ENCODE measurements at regions of chr2 and their contacts with region 1.

Region 1: DNA sequence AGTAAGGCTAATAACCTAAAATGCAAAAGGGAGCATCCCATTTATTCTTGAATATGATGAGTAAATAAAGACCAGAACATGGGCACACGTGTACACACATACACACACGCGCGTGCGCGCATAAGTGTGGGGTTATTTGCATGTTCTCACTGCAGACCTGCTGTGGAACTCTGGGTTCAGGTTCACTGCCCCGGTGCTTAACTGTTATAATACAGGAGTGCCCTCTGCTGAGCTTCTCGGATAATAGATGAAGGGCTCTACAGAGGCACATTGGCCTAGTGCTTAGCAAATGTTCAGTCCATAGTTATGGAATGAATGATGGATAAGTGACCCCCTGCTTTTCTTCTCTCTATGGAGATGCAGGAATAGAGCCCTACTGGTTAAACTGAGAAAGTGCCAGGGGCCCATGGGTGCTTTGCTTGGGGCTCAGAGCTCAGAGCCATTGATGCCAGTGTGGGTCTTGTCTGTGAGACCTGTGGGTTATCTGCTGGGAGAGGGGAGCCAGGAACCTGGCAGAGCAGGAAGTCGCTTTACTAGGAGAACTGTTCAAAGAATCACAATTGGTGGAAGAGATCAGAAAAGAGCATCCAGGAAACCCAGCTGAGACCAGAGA is 3.6 kb upstream of the ARL4C start:
- DNase-seq: peak; percentile 94
- H3K4me3 ChIP-seq: no peak overlapping the region
- H3K27ac ChIP-seq: peak overlapping the region in 1 of 8 donors; percentile 93
- H3K4me1 ChIP-seq: peaks cover 0 to 43% (median 23%) of the 10 kb centered on the region in 6 donors
- H3K27me3 ChIP-seq: peaks cover 0 to 14% (median 4%) of the 10 kb centered on the region in 7 donors
- CTCF ChIP-seq: peak; percentile 47 to 87 (median 69)
- POLR2A ChIP-seq: no peak

Region 2: GRCh38 chr2:233976690-233977294 is 523.7 kb before region 1 on chr2:
- intact Hi-C with region 1: loop called (anchors 5 kb)
- DNase-seq: no peak
- H3K4me3 ChIP-seq: no peak overlapping the region
- H3K27ac ChIP-seq: no peak overlapping the region
- H3K4me1 ChIP-seq: peaks cover 0 to 12% (median 0%) of the 10 kb centered on the region in 6 donors
- H3K27me3 ChIP-seq: peaks cover 0 to 26% (median 0%) of the 10 kb centered on the region in 7 donors
- CTCF ChIP-seq: peak in 5 of 11 experiments; percentile 30 to 59 (median 36)
- POLR2A ChIP-seq: no peak

Region 3: DNA sequence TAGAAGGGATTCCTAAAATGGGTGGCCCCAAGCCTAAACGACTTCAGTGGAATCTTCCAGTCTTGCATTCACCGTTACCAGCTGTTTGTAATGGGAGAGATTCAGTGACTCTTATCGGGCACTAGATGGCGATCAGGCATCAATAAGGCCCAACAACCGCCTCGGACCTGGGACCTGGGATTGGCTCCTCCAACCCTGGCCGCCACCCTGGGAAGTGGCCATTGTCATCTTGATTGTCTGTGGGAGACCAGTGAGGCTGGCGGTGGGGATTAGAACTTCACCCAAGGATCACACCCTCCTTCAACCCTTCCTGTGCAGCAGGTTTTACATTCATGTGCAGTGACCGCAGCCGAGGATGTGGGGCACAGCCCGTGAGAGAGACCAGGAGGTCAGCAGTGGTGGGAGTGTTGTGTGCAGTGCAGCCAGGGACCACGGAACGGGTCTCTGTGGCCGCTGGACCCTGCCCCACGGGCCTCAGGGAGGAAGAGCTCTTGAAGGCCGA is 364.7 kb before region 1 on chr2:
- intact Hi-C with region 1: loop called (anchors 5 kb)
- DNase-seq: peak; percentile 86
- H3K4me3 ChIP-seq: no peak overlapping the region
- H3K27ac ChIP-seq: peak overlapping the region in 1 of 8 donors; percentile 10
- H3K4me1 ChIP-seq: peaks cover 3 to 28% (median 9%) of the 10 kb centered on the region in 6 donors
- H3K27me3 ChIP-seq: peaks cover 0 to 17% (median 0%) of the 10 kb centered on the region in 7 donors
- CTCF ChIP-seq: peak; percentile 58 to 88 (median 80)
- POLR2A ChIP-seq: no peak

Region 4: GRCh38 chr2:234288974-234289455 is 211.5 kb before region 1 on chr2:
- intact Hi-C with region 1: loop called (anchors 5 kb)
- DNase-seq: peak; percentile 84
- H3K4me3 ChIP-seq: no peak overlapping the region
- H3K27ac ChIP-seq: peak overlapping the region in 7 of 8 donors; percentile 73 to 93 (median 83)
- H3K4me1 ChIP-seq: peaks cover 37 to 57% (median 53%) of the 10 kb centered on the region in 6 donors
- H3K27me3 ChIP-seq: peaks cover 0 to 9% (median 0%) of the 10 kb centered on the region in 7 donors
- CTCF ChIP-seq: peak; percentile 68 to 89 (median 86)
- POLR2A ChIP-seq: no peak

Region 5: DNA sequence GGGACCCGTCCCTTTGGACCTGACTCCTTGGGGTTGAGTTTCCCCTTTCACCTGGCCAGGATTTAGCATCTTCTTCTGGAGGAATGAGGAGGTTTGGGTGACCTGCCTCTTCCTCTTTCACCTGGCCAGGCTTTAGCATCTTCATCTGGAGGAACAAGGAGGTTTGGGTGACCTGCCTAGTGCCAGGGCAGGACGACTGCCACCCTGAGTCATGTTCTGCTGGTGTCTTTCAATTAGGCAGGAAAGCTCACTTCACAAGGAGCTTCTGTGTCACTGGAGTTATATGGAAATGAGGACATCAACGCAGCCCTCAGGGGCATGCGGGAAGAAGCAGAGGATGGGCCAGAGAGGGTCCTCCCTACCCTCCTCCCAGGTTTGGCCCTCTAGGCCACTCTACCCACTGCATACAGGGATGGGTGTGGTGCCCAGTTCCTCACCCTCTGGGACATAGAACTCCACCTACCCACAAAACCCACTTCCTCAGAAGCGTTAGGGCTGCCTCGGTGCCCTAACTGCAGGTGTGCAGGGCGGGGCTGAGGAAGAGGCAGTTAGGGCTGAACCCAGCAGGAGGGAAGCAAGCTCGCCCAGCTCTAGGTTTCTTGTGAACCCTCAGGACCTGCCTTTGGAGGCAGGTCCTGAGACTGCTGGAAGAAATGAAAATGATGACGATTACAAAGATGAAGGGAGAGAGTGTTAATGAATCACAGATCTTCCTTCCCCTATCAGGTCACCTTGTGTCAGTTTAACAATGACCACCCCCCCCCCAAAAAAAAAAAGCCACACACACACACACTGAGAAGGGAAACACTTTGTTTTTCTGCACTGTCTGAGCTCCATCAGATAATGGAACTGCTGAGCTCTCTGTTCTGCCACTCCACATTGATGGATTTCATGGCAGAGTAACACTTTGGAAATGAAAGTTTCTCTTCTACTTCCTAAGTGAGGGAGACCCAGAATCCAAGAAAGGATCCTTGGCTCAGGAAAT is 74.6 kb before region 1 on chr2:
- intact Hi-C with region 1: loop called (anchors 10 kb)
- DNase-seq: peak; percentile 94
- H3K4me3 ChIP-seq: peak overlapping the region in 1 of 8 donors; percentile 31
- H3K27ac ChIP-seq: peak overlapping the region; percentile 30 to 90 (median 82)
- H3K4me1 ChIP-seq: peaks cover 39 to 88% (median 71%) of the 10 kb centered on the region in 6 donors
- H3K27me3 ChIP-seq: no peaks in the 10 kb centered on the region
- CTCF ChIP-seq: peak in 1 of 11 experiments; percentile 7
- POLR2A ChIP-seq: no peak

Measured in spleen (tissue), 13 donors.